ENCODE measurements at regions of chr10 and their contacts with region 1.

Region 1: DNA sequence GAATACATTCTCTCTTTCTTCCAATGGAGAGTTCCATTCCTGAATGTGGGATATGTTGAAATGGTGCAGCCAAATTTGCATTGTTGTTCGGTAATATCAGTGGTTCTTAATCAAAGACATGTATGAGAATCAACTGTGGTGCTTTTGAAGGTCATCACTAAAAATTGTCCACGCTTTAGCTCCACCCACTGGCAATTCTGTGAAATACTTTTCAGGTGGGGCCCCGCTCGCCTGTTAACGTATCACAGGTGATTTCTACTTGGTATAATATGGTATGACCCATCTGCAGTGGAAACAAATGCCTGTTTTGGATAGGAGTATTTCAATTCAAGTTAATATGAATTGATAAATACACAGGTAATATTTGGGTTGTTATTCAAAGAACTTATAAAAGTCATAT is 178.4 kb downstream of the NSUN6 start:
- DNase-seq: no peak
- ATAC-seq: peak in 1 of 2 donors; percentile 12
- H3K4me3 ChIP-seq: no peak overlapping the region
- H3K27ac ChIP-seq: peak overlapping the region; percentile 79
- H3K4me1 ChIP-seq: no peaks in the 10 kb centered on the region
- H3K27me3 ChIP-seq: no peaks in the 10 kb centered on the region

Region 2: GRCh38 chr10:18340496-18341051 is 132.4 kb before region 1 on chr10:
- intact Hi-C with region 1: loop called in 2 of 4 experiments (anchors 10 kb)
- DNase-seq: peak in 2 of 3 donors; percentile 32 to 69
- ATAC-seq: peak; percentile 90 to 91
- H3K4me3 ChIP-seq: peak overlapping the region; percentile 70
- H3K27ac ChIP-seq: peak overlapping the region; percentile 94
- H3K4me1 ChIP-seq: no peaks in the 10 kb centered on the region
- H3K27me3 ChIP-seq: no peaks in the 10 kb centered on the region

Region 3: GRCh38 chr10:18400201-18400905 is 72.6 kb before region 1 on chr10:
- intact Hi-C with region 1: no loop called
- DNase-seq: no peak
- ATAC-seq: no peak
- H3K4me3 ChIP-seq: no peak overlapping the region
- H3K27ac ChIP-seq: no peak overlapping the region
- H3K4me1 ChIP-seq: no peaks in the 10 kb centered on the region
- H3K27me3 ChIP-seq: no peaks in the 10 kb centered on the region

Measured in right cardiac atrium (tissue), 5 donors.